ENCODE measurements at regions of chr1 and their contacts with region 1.

Region 1: DNA sequence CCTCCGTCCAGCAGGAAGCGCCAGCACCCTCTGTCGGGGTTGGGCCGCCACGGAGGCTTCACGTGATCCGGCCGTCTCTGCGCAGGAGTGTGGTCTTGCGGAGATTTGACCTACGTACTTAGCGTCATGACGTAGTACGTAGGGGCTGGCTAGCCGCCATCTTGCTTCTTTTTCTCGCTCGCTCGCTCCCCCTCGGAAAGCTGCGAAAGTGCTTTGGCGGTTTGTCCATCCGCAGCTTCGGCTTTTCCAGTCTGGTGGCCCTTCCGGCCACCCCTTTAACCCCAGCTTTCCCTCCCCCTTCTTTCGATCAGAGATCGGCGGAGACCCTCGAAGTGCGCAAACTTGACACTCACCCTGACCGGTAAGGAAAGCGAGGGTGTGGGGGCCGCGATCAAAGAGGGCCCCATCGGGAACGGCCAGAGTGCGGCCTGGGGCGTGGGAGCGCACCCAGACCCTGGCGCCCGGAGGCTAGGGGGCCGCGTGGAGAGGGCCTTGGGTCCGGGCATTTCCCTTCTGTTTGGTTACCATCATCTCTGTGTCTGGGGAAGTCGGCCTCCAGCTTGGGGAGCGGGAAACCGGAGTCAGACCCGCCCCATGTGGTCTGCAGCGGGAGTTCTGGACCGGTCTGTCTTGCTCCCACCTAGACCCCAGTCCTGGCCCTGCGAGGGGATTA is at the start of gene PRRC2C:
- DNase-seq: peak; percentile 81
- ATAC-seq: peak; percentile 86
- H3K4me3 Mint-ChIP-seq: peak within 1 kb of the TSS; percentile 94
- H3K27ac Mint-ChIP-seq: peak within 1 kb of the TSS; percentile 94
- H3K4me1 Mint-ChIP-seq: peaks cover 56% of the 10 kb centered on the region
- H3K27me3 Mint-ChIP-seq: no peaks in the 10 kb centered on the region
- CTCF ChIP-seq: no peak
- total RNA-seq, gene PRRC2C: 262 and 272 TPM in 2 replicates

Region 2: DNA sequence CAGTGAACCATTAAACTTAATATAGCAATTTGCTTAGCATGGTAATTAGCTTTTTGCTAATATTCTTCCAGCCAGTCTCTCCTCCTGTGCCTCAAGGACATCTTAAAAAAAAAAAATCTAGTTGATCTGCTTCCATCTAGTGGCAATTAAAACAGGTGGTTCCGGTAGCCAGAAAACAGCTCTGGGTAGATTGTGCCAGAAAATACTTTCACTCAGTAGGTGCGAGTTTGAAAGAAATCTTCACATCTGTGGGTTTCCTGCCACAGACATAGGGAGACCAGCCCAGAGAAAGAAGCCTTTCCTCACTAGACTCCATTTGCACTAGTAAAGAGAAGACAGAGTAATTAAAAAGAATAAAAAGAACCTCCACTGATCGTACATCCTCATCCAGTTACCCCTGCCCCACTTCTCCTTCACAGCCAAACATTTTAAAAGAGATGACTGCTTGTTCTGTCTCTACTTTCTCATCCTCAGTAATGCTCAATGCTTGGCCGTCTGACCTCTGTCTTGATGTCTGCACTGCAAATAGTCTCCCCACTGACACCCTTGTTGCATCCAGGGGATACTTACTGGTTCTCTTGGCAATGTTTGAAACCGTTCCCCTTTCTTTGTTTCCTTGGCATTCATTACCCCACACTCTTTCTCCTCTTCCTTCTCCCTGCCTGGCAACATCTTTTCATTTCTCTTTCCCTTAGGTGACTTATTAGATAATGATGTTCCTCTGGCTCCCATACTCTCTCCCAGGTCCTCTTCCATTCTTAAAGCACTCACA is 1791.0 kb before region 1 on chr1:
- CTCF ChIA-PET with region 1: no interaction called
- POLR2A ChIA-PET with region 1: no interaction called
- intact Hi-C with region 1: loop called (anchors 10 kb)
- DNase-seq: no peak
- ATAC-seq: peak; percentile 9
- H3K4me3 Mint-ChIP-seq: peak overlapping the region; percentile 62
- H3K27ac Mint-ChIP-seq: peak overlapping the region; percentile 90
- H3K4me1 Mint-ChIP-seq: peaks cover 97% of the 10 kb centered on the region
- H3K27me3 Mint-ChIP-seq: no peaks in the 10 kb centered on the region
- CTCF ChIP-seq: no peak

Region 3: GRCh38 chr1:169844941-169845608 is 1640.4 kb before region 1 on chr1:
- CTCF ChIA-PET with region 1: no interaction called
- POLR2A ChIA-PET with region 1: no interaction called
- intact Hi-C with region 1: no loop called
- DNase-seq: no peak
- ATAC-seq: no peak
- H3K4me3 Mint-ChIP-seq: no peak overlapping the region
- H3K27ac Mint-ChIP-seq: no peak overlapping the region
- H3K4me1 Mint-ChIP-seq: no peaks in the 10 kb centered on the region
- H3K27me3 Mint-ChIP-seq: no peaks in the 10 kb centered on the region
- CTCF ChIP-seq: no peak

Region 4: DNA sequence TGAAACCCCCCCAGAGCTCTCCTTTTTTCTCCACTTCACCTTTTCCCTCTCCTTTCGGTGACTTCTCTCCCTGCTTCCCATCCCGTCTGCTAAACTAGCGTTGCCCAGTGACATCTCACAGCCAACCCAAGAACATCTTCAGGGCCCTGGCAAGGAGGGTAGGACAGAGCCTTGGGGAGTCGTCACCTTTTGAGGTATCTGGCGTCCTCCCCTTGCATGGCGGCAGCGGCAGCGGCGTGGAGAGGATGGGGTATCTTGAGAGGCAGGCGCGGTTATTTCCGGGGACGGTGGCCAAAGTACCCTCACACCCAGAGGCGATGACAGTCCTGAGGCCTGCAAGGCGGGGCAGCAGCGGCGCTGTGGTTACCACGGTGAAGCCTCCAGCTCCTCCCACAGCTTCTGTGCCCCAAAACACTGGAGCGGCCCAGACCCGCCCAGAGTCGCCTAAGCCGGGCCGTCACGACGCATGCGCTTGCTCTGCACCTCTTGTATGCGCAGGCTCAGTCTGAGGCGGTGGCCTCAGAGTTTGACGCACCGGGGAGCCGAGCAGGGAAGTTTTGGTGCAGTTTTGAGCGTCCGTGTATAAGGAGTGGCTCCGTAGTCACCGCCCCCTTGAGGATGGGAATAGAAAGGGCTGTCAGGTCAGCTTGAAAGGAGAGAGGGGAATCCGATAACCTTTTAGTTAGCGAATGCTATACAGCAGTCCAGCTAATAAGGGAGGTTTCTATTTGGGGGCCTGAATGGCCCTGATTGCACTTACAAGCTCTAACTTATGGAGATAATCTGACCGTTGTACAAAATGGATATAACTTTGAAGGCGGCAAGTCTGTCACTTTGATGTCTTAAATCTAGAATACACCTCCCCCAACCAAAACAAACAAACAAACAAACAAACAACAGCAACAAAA is 1411.0 kb before region 1 on chr1 and contains the start of gene KIFAP3:
- CTCF ChIA-PET with region 1: no interaction called
- POLR2A ChIA-PET with region 1: no interaction called
- intact Hi-C with region 1: loop called (anchors 10 kb)
- DNase-seq: peak; percentile 89
- ATAC-seq: peak; percentile 93
- H3K4me3 Mint-ChIP-seq: peak within 1 kb of the TSS; percentile 94
- H3K27ac Mint-ChIP-seq: peak within 1 kb of the TSS; percentile 87
- H3K4me1 Mint-ChIP-seq: peaks cover 52% of the 10 kb centered on the region
- H3K27me3 Mint-ChIP-seq: peaks cover 2% of the 10 kb centered on the region
- CTCF ChIP-seq: no peak
- total RNA-seq, gene KIFAP3: 11.8 and 12.7 TPM in 2 replicates

Region 5: DNA sequence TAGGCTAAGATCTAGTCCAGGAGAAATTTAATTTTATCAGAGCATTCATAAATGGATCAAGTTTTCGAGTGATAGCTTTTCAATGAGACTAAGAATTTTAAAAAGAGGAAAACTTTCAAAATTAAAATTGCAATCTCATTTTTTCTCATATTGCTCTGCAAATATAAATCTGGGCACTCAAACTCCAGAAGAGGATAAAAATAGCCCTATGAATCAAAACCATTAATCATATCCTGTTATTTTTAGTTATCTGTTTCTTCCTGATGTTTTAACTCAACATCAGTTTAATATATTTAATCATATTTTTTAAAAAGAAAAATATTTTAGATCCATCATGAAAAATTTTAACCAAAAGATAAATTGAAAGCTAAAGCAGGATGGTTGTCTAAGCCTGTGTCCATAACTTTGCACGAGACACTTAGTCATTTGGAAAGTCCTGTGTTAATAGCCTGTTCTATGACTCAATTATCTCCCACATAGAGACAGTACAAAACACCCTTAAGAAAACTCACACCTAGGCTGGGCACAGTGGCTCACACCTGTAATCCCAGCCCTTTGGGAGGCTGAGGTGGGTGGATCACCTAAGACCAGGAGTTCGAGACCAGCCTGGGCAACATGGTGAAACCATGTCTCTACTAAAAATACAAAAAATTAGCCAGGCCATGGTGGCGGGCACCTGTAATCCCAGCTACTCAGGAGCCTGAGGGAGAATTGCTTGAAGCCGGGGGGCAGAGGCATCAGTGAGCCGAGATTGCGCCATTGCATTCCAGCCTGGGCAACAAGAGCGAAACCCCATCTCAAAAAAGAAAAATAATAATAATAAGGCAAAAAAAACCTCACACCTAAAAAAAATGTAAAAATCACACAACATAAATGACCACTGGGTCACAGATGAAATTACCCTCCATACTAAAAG is 17.1 kb before region 1 on chr1:
- CTCF ChIA-PET with region 1: no interaction called
- POLR2A ChIA-PET with region 1: no interaction called
- intact Hi-C with region 1: no loop called
- DNase-seq: no peak
- ATAC-seq: no peak
- H3K4me3 Mint-ChIP-seq: no peak overlapping the region
- H3K27ac Mint-ChIP-seq: no peak overlapping the region
- H3K4me1 Mint-ChIP-seq: no peaks in the 10 kb centered on the region
- H3K27me3 Mint-ChIP-seq: peaks cover 4% of the 10 kb centered on the region
- CTCF ChIP-seq: no peak

Region 6: DNA sequence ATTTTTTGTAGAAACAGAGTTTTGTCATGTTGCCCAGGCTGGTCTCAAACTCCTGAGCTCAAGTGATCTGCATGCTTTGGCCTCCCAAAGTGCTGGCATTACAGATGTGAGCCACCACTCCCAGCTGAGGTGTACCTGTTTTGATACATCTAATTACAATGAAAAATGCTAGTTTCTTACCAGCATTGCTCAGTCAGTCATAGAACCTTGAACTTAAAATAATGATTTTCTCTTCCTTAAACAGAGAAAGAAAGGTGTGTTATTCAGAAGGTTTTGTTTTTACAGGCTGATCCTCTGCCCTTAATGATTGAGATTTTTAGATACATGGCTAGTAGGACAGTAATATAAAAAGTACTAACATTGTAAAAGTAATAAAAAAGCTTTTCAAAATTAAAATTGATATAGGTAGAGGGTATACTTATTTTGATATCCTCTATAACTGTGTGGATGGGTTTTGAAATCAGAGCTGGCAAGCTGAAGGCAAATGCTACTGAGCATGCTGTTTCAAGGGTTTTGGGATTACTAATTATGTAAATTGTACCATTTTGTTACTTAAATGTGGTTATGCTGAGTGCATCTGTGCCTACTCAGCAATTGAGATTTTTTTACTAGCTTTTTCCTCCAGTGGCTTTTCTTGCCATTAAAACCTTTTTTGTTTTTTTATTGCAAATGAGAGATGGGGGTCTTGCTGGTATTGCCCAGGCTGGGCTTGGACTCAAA is 16.0 kb after region 1 on chr1:
- CTCF ChIA-PET with region 1: interaction called, 14 read pairs
- POLR2A ChIA-PET with region 1: interaction called, 14 read pairs
- intact Hi-C with region 1: loop called (anchors 2 kb)
- DNase-seq: no peak
- ATAC-seq: peak; percentile 65
- H3K4me3 Mint-ChIP-seq: no peak overlapping the region
- H3K27ac Mint-ChIP-seq: no peak overlapping the region
- H3K4me1 Mint-ChIP-seq: peaks cover 87% of the 10 kb centered on the region
- H3K27me3 Mint-ChIP-seq: no peaks in the 10 kb centered on the region
- CTCF ChIP-seq: no peak

Region 7: GRCh38 chr1:171530676-171531075 is 45.2 kb after region 1 on chr1:
- CTCF ChIA-PET with region 1: interaction called, 5 read pairs
- POLR2A ChIA-PET with region 1: no interaction called
- intact Hi-C with region 1: loop called (anchors 1 kb)
- DNase-seq: no peak
- ATAC-seq: no peak
- H3K4me3 Mint-ChIP-seq: no peak overlapping the region
- H3K27ac Mint-ChIP-seq: no peak overlapping the region
- H3K4me1 Mint-ChIP-seq: no peaks in the 10 kb centered on the region
- H3K27me3 Mint-ChIP-seq: no peaks in the 10 kb centered on the region
- CTCF ChIP-seq: no peak

Region 8: GRCh38 chr1:171841050-171841940 is 355.8 kb after region 1 on chr1 and contains the start of gene DNM3:
- CTCF ChIA-PET with region 1: no interaction called
- POLR2A ChIA-PET with region 1: no interaction called
- intact Hi-C with region 1: loop called (anchors 5 kb)
- DNase-seq: peak; percentile 91
- ATAC-seq: peak; percentile 94
- H3K4me3 Mint-ChIP-seq: peak within 1 kb of the TSS; percentile 85
- H3K27ac Mint-ChIP-seq: peak within 1 kb of the TSS; percentile 36
- H3K4me1 Mint-ChIP-seq: peaks cover 18% of the 10 kb centered on the region
- H3K27me3 Mint-ChIP-seq: peaks cover 20% of the 10 kb centered on the region
- CTCF ChIP-seq: no peak
- total RNA-seq, gene DNM3: 1.9 and 2.1 TPM in 2 replicates

Region 9: DNA sequence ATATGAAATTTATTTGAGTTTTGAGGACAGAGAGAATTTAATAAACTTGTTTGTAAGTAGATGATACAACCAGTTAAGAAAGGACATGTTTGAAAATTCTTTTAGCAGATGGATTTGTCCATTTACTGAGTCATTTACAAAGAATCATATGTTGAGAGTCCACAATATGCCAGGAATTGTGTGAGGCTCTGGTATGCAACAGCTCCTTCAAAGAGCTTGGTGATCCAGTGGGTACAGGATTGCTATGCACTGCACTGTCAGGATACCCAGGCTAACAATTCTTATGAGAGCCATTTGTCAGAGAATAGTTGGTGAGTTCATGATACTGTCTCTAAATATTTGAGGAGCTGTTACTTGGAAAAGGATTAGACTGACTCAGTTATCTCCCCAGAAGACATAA is 366.8 kb after region 1 on chr1:
- CTCF ChIA-PET with region 1: no interaction called
- POLR2A ChIA-PET with region 1: no interaction called
- intact Hi-C with region 1: no loop called
- DNase-seq: no peak
- ATAC-seq: no peak
- H3K4me3 Mint-ChIP-seq: no peak overlapping the region
- H3K27ac Mint-ChIP-seq: no peak overlapping the region
- H3K4me1 Mint-ChIP-seq: no peaks in the 10 kb centered on the region
- H3K27me3 Mint-ChIP-seq: peaks cover 2% of the 10 kb centered on the region
- CTCF ChIP-seq: no peak